Ovary (tissue), 10 donors: ENCODE measurements at regions of chr17 and their contacts with region 1.

Region 1: GRCh38 chr17:34420254-34420766 is 57.3 kb upstream of the CCL1 start:
- DNase-seq: peak; percentile 29 to 68 (median 66)
- H3K4me3 ChIP-seq: no peak overlapping the region
- H3K27ac ChIP-seq: no peak overlapping the region
- H3K4me1 ChIP-seq: no peaks in the 10 kb centered on the region
- H3K27me3 ChIP-seq: no peaks in the 10 kb centered on the region
- CTCF ChIP-seq: peak; percentile 75 to 77 (median 75)
- EP300 ChIP-seq: no peak
- POLR2A ChIP-seq: no peak

Region 2: DNA sequence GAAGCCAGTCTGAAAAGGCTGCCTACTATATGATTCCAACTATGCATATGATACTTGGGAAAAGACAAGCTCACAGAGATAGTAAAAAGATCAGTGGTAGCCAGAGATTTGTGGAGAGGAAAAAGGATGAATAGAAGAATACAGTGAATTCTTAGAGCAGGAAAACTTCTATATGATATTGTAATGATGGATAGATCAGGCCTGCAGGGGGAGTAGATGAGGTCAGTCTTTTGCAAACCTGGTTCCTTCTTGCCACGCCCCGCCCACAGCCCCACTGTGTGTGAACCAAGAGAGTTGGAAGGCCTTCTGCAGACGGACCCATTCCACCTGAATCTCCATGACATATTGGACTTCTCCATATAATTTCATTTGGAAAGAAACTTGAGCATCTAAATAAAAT is 101.8 kb before region 1 on chr17:
- intact Hi-C with region 1: no loop called
- DNase-seq: no peak
- H3K4me3 ChIP-seq: no peak overlapping the region
- H3K27ac ChIP-seq: no peak overlapping the region
- H3K4me1 ChIP-seq: no peaks in the 10 kb centered on the region
- H3K27me3 ChIP-seq: no peaks in the 10 kb centered on the region
- CTCF ChIP-seq: no peak
- EP300 ChIP-seq: no peak
- POLR2A ChIP-seq: no peak

Region 3: GRCh38 chr17:34637548-34638525 is 217.5 kb after region 1 on chr17:
- intact Hi-C with region 1: loop called (anchors 5 to 10 kb)
- DNase-seq: peak; percentile 42 to 81 (median 74)
- H3K4me3 ChIP-seq: peak overlapping the region; percentile 1
- H3K27ac ChIP-seq: no peak overlapping the region
- H3K4me1 ChIP-seq: no peaks in the 10 kb centered on the region
- H3K27me3 ChIP-seq: no peaks in the 10 kb centered on the region
- CTCF ChIP-seq: peak; percentile 37 to 73 (median 62)
- EP300 ChIP-seq: no peak
- POLR2A ChIP-seq: no peak